Naive thymus-derived CD4-positive, alpha-beta T cell (primary cell): ENCODE measurements at regions of chr2 and their contacts with region 1.

Region 1: GRCh38 chr2:161160226-161161069 is at the start of gene TANK:
- DNase-seq: peak; percentile 72 to 90 (median 88)
- ATAC-seq: peak; percentile 96
- H3K4me3 ChIP-seq: peak within 1 kb of the TSS; percentile 75
- H3K4me3 Mint-ChIP-seq: peak within 1 kb of the TSS; percentile 95 to 100 (median 98)
- H3K27ac ChIP-seq: peak within 1 kb of the TSS; percentile 84
- H3K27ac Mint-ChIP-seq: peak within 1 kb of the TSS; percentile 95 to 99 (median 98)
- H3K4me1 ChIP-seq: peaks cover 19 to 39% of the 10 kb centered on the region in 2 donors
- H3K4me1 Mint-ChIP-seq: peaks cover 21 to 64% (median 60%) of the 10 kb centered on the region in 7 donors
- H3K27me3 ChIP-seq: no peaks in the 10 kb centered on the region
- H3K27me3 Mint-ChIP-seq: no peaks in the 10 kb centered on the region
- total RNA-seq, gene TANK: 57.4 to 142 (median 62.4) TPM

Region 2: GRCh38 chr2:159904127-159904958 is 1256.1 kb before region 1 on chr2:
- CTCF ChIA-PET with region 1: no interaction called
- POLR2A ChIA-PET with region 1: no interaction called
- intact Hi-C with region 1: loop called in 1 of 2 experiments (anchors 1 kb)
- DNase-seq: peak; percentile 70 to 85 (median 83)
- ATAC-seq: peak; percentile 91
- H3K4me3 ChIP-seq: peak within 1 kb of the TSS; percentile 95
- H3K4me3 Mint-ChIP-seq: peak within 1 kb of the TSS; percentile 93 to 100 (median 98)
- H3K27ac ChIP-seq: peak within 1 kb of the TSS; percentile 87
- H3K27ac Mint-ChIP-seq: peak within 1 kb of the TSS; percentile 96 to 100 (median 98)
- H3K4me1 ChIP-seq: peaks cover 3 to 8% of the 10 kb centered on the region in 2 donors
- H3K4me1 Mint-ChIP-seq: peaks cover 24 to 52% (median 41%) of the 10 kb centered on the region in 7 donors
- H3K27me3 ChIP-seq: no peaks in the 10 kb centered on the region
- H3K27me3 Mint-ChIP-seq: peaks cover 0 to 3% (median 0%) of the 10 kb centered on the region in 5 donors

Region 3: DNA sequence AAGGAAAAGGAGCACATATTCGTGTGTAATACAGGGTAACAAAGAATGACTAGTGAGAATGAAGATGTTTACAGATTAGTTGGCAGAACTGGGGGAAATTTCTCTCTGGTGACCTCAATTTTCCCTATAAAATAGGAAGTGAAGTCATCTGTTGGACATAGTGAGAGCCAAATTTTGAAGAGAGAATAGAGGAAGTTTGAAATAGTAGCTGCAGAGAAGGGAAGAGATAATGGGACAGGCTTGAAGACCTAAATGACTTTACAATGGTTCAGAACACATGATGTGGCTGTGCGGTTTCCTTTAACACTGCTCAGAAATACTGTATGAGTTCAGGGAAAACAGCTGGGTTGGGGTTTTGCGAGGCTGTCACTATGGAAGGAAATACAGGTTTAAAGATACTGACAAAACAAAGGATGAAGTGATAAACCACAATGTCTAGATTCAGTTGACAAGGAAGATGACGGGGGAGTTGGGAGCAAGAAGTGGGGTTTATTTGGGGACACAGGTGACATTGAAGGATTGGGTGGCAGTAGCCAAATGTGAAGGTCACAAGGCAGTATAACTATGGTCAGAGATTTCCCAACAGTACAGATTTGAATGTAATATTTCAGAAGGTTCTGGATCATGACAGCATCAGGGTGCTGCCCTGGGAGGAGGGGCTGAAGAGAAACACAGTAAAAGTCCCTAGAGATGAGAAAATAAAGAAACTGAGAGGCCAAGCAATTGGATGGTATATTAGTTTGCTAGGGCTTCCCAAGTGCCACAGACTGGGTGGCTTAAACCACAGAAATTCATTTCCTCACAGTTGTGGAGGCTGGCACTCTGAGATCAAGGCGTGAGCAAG is 82.9 kb before region 1 on chr2:
- CTCF ChIA-PET with region 1: no interaction called
- POLR2A ChIA-PET with region 1: no interaction called
- intact Hi-C with region 1: loop called (anchors 1 to 2 kb)
- DNase-seq: peak; percentile 10 to 84 (median 73)
- ATAC-seq: peak; percentile 90
- H3K4me3 ChIP-seq: peak overlapping the region; percentile 5
- H3K4me3 Mint-ChIP-seq: peak overlapping the region; percentile 1 to 76 (median 62)
- H3K27ac ChIP-seq: peak overlapping the region; percentile 40
- H3K27ac Mint-ChIP-seq: peak overlapping the region; percentile 60 to 94 (median 88)
- H3K4me1 ChIP-seq: peaks cover 23 to 25% of the 10 kb centered on the region in 2 donors
- H3K4me1 Mint-ChIP-seq: peaks cover 24 to 60% (median 29%) of the 10 kb centered on the region in 7 donors
- H3K27me3 ChIP-seq: no peaks in the 10 kb centered on the region
- H3K27me3 Mint-ChIP-seq: no peaks in the 10 kb centered on the region

Region 4: GRCh38 chr2:161177969-161178368 is 17.5 kb after region 1 on chr2:
- CTCF ChIA-PET with region 1: no interaction called
- POLR2A ChIA-PET with region 1: interaction called, 7 read pairs
- intact Hi-C with region 1: loop called in 1 of 2 experiments (anchors 2 kb)
- DNase-seq: no peak
- ATAC-seq: no peak
- H3K4me3 ChIP-seq: no peak overlapping the region
- H3K4me3 Mint-ChIP-seq: no peak overlapping the region
- H3K27ac ChIP-seq: no peak overlapping the region
- H3K27ac Mint-ChIP-seq: no peak overlapping the region
- H3K4me1 ChIP-seq: peaks cover 0 to 5% of the 10 kb centered on the region in 2 donors
- H3K4me1 Mint-ChIP-seq: peaks cover 17 to 44% (median 33%) of the 10 kb centered on the region in 7 donors
- H3K27me3 ChIP-seq: no peaks in the 10 kb centered on the region
- H3K27me3 Mint-ChIP-seq: no peaks in the 10 kb centered on the region

Region 5: GRCh38 chr2:161992526-161992925 is 832.1 kb after region 1 on chr2:
- CTCF ChIA-PET with region 1: no interaction called
- POLR2A ChIA-PET with region 1: no interaction called
- intact Hi-C with region 1: loop called in 1 of 2 experiments (anchors 10 kb)
- DNase-seq: peak in 8 of 9 donors; percentile 52 to 78 (median 72)
- ATAC-seq: peak; percentile 86
- H3K4me3 ChIP-seq: peak overlapping the region; percentile 46
- H3K4me3 Mint-ChIP-seq: peak overlapping the region; percentile 80 to 91 (median 86)
- H3K27ac ChIP-seq: peak overlapping the region; percentile 68
- H3K27ac Mint-ChIP-seq: peak overlapping the region; percentile 91 to 100 (median 97)
- H3K4me1 ChIP-seq: peaks cover 26 to 51% of the 10 kb centered on the region in 2 donors
- H3K4me1 Mint-ChIP-seq: peaks cover 35 to 78% (median 66%) of the 10 kb centered on the region in 7 donors
- H3K27me3 ChIP-seq: no peaks in the 10 kb centered on the region
- H3K27me3 Mint-ChIP-seq: no peaks in the 10 kb centered on the region